ENCODE measurements at regions of chr7 and their contacts with region 1.

Region 1: DNA sequence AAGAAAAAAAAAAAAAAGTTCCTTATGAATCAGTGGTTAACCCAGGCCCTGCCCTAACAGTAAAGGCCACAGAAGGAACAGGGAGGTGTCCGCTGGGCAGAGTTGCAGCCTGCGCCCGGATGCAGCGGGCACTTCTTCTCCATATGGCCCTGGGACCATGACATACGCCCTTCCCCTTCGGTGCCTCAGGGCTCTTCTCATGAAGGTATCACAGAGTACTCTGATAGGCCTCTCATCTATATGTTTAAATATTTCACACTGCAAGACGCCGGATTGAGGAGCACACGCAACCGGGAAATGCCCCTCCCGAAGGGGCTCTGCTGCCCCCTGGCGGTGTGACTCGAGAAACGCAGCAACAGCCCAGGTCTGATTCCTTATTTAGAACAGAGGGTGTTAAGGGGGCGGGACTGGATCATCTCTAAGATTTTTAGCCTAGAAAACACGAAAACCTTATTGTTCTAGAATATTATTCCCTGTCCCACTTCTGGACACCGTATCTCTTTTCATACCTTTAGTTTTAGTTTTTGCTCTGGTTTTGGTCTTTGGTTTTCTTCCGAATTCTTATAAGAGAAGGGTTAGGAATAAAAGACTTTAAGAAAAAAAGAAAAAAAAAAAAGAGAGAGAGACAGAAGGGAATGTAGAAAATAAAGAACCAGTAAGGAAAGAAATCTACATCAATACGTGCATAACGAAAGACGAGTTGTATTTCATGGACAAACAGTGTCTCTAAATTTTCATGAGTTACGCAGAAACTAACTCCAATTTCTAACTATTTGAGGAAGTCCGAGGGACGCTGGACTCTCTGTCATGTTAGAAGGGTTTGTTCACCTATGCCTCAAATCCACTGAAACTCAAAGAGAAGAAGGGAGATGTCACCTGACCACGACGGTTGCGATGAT is 12.0 kb downstream of the DAGLB start:
- DNase-seq: peak; percentile 94
- ATAC-seq: peak; percentile 85
- H3K4me3 Mint-ChIP-seq: peak overlapping the region; percentile 52
- H3K27ac Mint-ChIP-seq: peak overlapping the region; percentile 80
- H3K4me1 Mint-ChIP-seq: peaks cover 39% of the 10 kb centered on the region
- H3K27me3 Mint-ChIP-seq: no peaks in the 10 kb centered on the region

Region 2: GRCh38 chr7:6256677-6257535 is 178.8 kb before region 1 on chr7:
- CTCF ChIA-PET with region 1: no interaction called
- POLR2A ChIA-PET with region 1: no interaction called
- intact Hi-C with region 1: no loop called
- DNase-seq: peak; percentile 79
- ATAC-seq: peak; percentile 90
- H3K4me3 Mint-ChIP-seq: no peak overlapping the region
- H3K27ac Mint-ChIP-seq: no peak overlapping the region
- H3K4me1 Mint-ChIP-seq: peaks cover 38% of the 10 kb centered on the region
- H3K27me3 Mint-ChIP-seq: peaks cover 13% of the 10 kb centered on the region

Region 3: GRCh38 chr7:6447581-6448199 is 12.0 kb after region 1 on chr7 and contains the start of gene DAGLB:
- CTCF ChIA-PET with region 1: interaction called, 12 read pairs
- POLR2A ChIA-PET with region 1: interaction called, 5 read pairs
- intact Hi-C with region 1: loop called in 1 of 2 experiments (anchors 1 kb)
- DNase-seq: peak; percentile 98
- ATAC-seq: peak; percentile 87
- H3K4me3 Mint-ChIP-seq: peak within 1 kb of the TSS; percentile 94
- H3K27ac Mint-ChIP-seq: peak within 1 kb of the TSS; percentile 89
- H3K4me1 Mint-ChIP-seq: peaks cover 37% of the 10 kb centered on the region
- H3K27me3 Mint-ChIP-seq: no peaks in the 10 kb centered on the region
- total RNA-seq, gene DAGLB: 9.8 to 15.2 TPM

Region 4: GRCh38 chr7:7535691-7536090 is 1100.0 kb after region 1 on chr7 and contains the start of gene COL28A1:
- CTCF ChIA-PET with region 1: no interaction called
- POLR2A ChIA-PET with region 1: no interaction called
- intact Hi-C with region 1: no loop called
- DNase-seq: no peak
- ATAC-seq: no peak
- H3K4me3 Mint-ChIP-seq: no peak within 1 kb of the TSS
- H3K27ac Mint-ChIP-seq: no peak within 1 kb of the TSS
- H3K4me1 Mint-ChIP-seq: no peaks in the 10 kb centered on the region
- H3K27me3 Mint-ChIP-seq: peaks cover 1% of the 10 kb centered on the region
- total RNA-seq, gene COL28A1: not detected

Measured in activated CD4-positive, alpha-beta T cell treated with anti-CD3 and anti-CD28 coated beads for 36 hours (primary cell).